ENCODE measurements at regions of chr3 and their contacts with region 1.

Region 1: DNA sequence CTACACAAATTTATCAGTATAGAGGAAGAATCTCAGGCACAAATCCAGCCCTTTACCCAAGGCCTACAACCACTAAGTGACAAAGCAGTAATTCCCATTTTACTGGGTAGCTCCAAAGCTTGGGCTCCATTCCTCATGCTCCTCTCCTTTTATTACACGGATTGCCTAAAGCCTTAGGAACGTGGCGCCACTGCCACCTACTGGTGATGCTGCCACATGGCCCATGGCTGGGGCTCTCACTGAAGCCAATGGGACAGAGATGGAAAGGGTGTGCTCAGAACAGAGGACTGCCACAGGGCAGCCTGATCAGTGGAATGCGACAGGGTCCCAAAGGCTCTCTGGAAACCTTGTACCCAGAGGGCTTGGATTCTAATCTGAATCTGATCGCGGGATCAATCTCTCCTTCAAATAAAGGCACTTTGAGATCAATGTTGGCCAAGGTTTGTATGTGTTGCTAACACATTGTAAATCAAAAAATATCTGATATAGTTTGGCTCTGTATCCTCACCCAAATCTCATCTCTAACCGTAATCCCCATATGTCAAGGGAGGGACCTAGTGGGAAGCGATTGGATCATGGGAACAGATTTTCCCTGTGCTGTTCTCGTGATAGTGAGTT is 33.5 kb upstream of the LYZL4 start:
- DNase-seq: peak; percentile 80 to 98
- H3K4me3 ChIP-seq: no peak overlapping the region
- H3K27ac ChIP-seq: no peak overlapping the region
- H3K4me1 ChIP-seq: peaks cover 4 to 34% (median 23%) of the 10 kb centered on the region in 4 experiments; a peak in 6 of 7 replicates
- H3K27me3 ChIP-seq: no peaks in the 10 kb centered on the region
- CTCF ChIP-seq: peak; percentile 97 to 98 (median 98)
- EP300 ChIP-seq: no peak
- POLR2A ChIP-seq: no peak
- RAD21 ChIP-seq: peak; percentile 100

Region 2: GRCh38 chr3:42229942-42230688 is 213.8 kb before region 1 on chr3:
- CTCF ChIA-PET with region 1: interaction called, 66 read pairs
- POLR2A ChIA-PET with region 1: no interaction called
- DNase-seq: no peak
- H3K4me3 ChIP-seq: no peak overlapping the region
- H3K27ac ChIP-seq: no peak overlapping the region
- H3K4me1 ChIP-seq: 0 out of 7 replicates have a peak, but pooled peaks cover 0 to 4% (median 0%) of the 10 kb centered on the region in 4 experiments
- H3K27me3 ChIP-seq: no peaks in the 10 kb centered on the region; a peak in 1 of 7 replicates
- CTCF ChIP-seq: peak in 2 of 3 experiments; percentile 61 to 67; a peak in 3 of 4 replicates
- EP300 ChIP-seq: no peak
- POLR2A ChIP-seq: no peak
- RAD21 ChIP-seq: peak; percentile 86 to 88

Region 3: GRCh38 chr3:42256135-42256819 is 187.7 kb before region 1 on chr3:
- CTCF ChIA-PET with region 1: interaction called, 193 read pairs
- POLR2A ChIA-PET with region 1: interaction called, 4 read pairs
- DNase-seq: no peak
- H3K4me3 ChIP-seq: no peak overlapping the region
- H3K27ac ChIP-seq: no peak overlapping the region
- H3K4me1 ChIP-seq: no peaks in the 10 kb centered on the region
- H3K27me3 ChIP-seq: no peaks in the 10 kb centered on the region
- CTCF ChIP-seq: no peak
- EP300 ChIP-seq: no peak
- POLR2A ChIP-seq: no peak
- RAD21 ChIP-seq: no peak

Region 4: DNA sequence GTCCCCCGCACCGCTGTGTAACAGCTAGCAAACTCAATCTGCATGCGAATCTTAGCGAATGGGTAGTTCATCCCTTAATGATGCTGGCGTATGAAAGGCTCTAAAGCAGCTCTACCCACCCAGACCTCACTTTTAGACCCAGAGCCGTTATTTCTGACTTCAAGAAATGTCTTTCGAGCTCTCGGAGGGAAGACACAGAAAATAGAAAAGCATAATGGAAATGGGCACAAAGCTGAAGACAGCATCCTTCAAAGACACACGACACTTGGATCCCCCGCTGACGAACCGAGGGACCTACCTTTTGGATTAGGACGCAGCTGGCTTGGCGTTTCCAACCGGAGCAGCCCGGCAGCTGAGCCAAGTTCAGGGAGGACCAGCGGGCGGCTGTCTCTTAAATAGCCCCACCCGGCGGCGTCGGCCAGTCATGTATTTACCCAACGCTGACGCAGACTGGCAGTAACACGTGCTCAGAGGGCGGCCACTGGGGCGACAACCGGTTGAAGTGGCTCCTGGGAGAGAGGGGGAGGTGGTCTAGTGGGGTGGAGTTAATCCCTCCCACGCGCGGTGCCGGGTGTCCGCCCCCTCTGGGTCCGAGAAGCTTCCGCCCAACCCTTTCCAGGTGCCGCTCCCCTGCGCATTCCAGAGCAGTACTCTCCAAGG is 179.4 kb before region 1 on chr3:
- CTCF ChIA-PET with region 1: interaction called, 23 read pairs
- POLR2A ChIA-PET with region 1: no interaction called
- DNase-seq: peak in 1 of 2 experiments; percentile 60
- H3K4me3 ChIP-seq: no peak overlapping the region
- H3K27ac ChIP-seq: no peak overlapping the region
- H3K4me1 ChIP-seq: peaks cover 0 to 9% (median 1%) of the 10 kb centered on the region in 4 experiments; a peak in 5 of 7 replicates
- H3K27me3 ChIP-seq: peaks cover 2 to 31% (median 30%) of the 10 kb centered on the region in 4 experiments
- CTCF ChIP-seq: no peak
- EP300 ChIP-seq: no peak
- POLR2A ChIP-seq: no peak
- RAD21 ChIP-seq: no peak

Region 5: GRCh38 chr3:42425736-42426407 is 18.1 kb before region 1 on chr3:
- CTCF ChIA-PET with region 1: interaction called, 15 read pairs
- POLR2A ChIA-PET with region 1: interaction called, 3 read pairs
- DNase-seq: no peak
- H3K4me3 ChIP-seq: no peak overlapping the region
- H3K27ac ChIP-seq: no peak overlapping the region
- H3K4me1 ChIP-seq: no peaks in the 10 kb centered on the region
- H3K27me3 ChIP-seq: no peaks in the 10 kb centered on the region
- CTCF ChIP-seq: no peak
- EP300 ChIP-seq: no peak
- POLR2A ChIP-seq: no peak
- RAD21 ChIP-seq: peak; percentile 13 to 15; a peak in 3 of 4 replicates

Measured in H1 (cell line).